ENCODE measurements at regions of chr9 and their contacts with region 1.

Region 1: GRCh38 chr9:90870621-90871326 is 69.2 kb downstream of the SYK start:
- DNase-seq: peak in 12 of 14 experiments; percentile 4 to 72 (median 16)
- ATAC-seq: no peak
- H3K4me3 ChIP-seq: no peak overlapping the region
- H3K4me3 Mint-ChIP-seq: no peak overlapping the region
- H3K27ac ChIP-seq: no peak overlapping the region
- H3K27ac Mint-ChIP-seq: no peak overlapping the region
- H3K4me1 ChIP-seq: no peaks in the 10 kb centered on the region
- H3K4me1 Mint-ChIP-seq: no peaks in the 10 kb centered on the region
- H3K27me3 ChIP-seq: no peaks in the 10 kb centered on the region
- H3K27me3 Mint-ChIP-seq: peaks cover 17% of the 10 kb centered on the region
- CTCF ChIP-seq: peak; percentile 98

Region 2: DNA sequence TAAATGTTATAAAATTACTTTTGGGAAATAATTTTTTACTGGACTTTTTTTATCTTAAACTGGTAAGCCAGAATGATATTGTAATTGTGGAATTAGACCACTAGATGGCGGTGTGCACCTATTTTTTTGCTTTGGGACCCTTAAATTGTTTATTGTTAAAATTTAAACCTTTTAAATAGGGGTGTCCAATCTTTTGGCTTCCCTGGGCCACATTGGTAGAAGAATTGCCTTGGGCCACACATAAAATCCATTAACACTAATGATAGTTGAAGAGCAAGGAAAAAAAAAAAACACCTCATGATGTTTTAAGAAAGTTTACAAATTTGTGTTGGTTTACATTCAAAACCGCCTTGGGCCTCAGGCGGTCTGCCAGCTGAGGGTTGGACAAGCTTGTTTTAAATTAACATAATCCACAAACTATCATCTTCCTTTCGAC is 1294.4 kb before region 1 on chr9:
- CTCF ChIA-PET with region 1: no interaction called
- POLR2A ChIA-PET with region 1: no interaction called
- intact Hi-C with region 1: loop called (anchors 2 kb)
- DNase-seq: peak in 4 of 14 experiments; percentile 47 to 70 (median 54)
- ATAC-seq: no peak
- H3K4me3 ChIP-seq: no peak overlapping the region
- H3K4me3 Mint-ChIP-seq: no peak overlapping the region
- H3K27ac ChIP-seq: no peak overlapping the region
- H3K27ac Mint-ChIP-seq: no peak overlapping the region
- H3K4me1 ChIP-seq: peaks cover 11% of the 10 kb centered on the region
- H3K4me1 Mint-ChIP-seq: peaks cover 13% of the 10 kb centered on the region
- H3K27me3 ChIP-seq: peaks cover 12 to 13% of the 10 kb centered on the region in 2 experiments
- H3K27me3 Mint-ChIP-seq: peaks cover 54% of the 10 kb centered on the region
- CTCF ChIP-seq: peak; percentile 90

Region 3: DNA sequence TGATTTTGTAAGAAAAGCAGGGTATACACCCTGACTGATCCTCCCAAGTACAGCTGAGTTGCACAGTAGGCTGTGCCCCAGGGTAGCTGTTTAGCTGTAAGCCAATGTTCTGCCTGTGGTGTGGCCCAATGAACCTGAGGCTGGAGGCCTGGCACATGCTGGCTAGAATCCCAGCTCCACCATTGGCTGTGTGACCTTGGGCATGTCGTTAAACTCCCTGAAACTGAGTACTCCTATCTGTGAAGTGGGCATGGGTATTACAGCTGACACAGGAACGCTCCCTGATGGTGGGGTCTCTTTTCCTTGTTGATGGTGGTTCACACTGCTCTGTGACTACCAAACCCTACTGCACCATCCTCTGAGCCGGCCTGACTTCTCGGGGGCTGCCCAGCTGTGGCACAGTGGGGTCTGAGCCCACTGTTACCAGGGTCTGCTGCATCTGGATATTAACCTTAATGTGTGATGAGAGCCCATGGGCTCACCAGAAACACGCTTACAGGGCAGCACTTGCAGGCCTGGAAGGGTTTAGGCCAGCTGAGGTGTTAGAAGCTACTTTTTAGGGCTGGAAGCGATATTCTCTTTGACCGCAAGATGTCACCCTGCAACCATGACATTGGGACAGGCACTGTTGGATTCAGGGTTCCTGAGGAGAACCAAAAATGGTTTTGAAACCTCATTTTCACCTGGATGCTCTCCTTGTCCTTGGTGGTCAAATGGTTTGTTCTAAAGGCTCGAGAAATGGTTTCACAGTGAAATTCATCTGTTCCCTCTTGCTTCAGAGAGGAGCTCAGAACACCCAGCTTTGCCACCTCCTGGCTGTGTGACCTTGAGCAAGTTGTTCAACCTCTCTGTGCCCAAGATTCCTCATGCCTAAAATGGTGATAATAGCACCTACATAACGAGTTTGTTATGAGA is 1272.8 kb before region 1 on chr9:
- CTCF ChIA-PET with region 1: interaction called, 5 read pairs
- POLR2A ChIA-PET with region 1: no interaction called
- intact Hi-C with region 1: loop called (anchors 1 to 2 kb)
- DNase-seq: peak in 13 of 14 experiments; percentile 27 to 81 (median 44)
- ATAC-seq: peak; percentile 42
- H3K4me3 ChIP-seq: no peak overlapping the region
- H3K4me3 Mint-ChIP-seq: no peak overlapping the region
- H3K27ac ChIP-seq: no peak overlapping the region
- H3K27ac Mint-ChIP-seq: no peak overlapping the region
- H3K4me1 ChIP-seq: peaks cover 5% of the 10 kb centered on the region
- H3K4me1 Mint-ChIP-seq: peaks cover 2% of the 10 kb centered on the region
- H3K27me3 ChIP-seq: peaks cover 0 to 4% of the 10 kb centered on the region in 2 experiments
- H3K27me3 Mint-ChIP-seq: no peaks in the 10 kb centered on the region
- CTCF ChIP-seq: peak; percentile 68

Region 4: DNA sequence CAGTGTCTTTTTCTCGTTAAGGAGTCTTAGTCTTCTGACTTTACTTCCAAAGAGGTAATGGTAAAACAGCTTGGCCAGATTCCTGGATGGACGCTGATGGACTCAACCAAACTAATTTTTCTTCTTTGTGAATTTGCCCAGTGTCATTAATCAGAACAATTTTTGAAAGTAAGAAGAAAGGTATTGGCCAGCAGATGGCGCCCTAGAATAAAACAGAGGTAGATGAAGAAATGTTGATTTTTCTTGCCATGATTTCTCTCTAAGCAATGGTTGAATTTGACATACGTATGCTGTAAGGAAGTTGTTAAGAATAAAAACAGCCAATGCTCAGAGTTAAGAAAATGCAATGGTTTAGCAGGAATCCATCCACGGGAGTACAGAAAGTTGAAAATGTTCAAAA is 728.2 kb before region 1 on chr9:
- CTCF ChIA-PET with region 1: no interaction called
- POLR2A ChIA-PET with region 1: no interaction called
- intact Hi-C with region 1: loop called (anchors 1 kb)
- DNase-seq: peak; percentile 13 to 74 (median 50)
- ATAC-seq: no peak
- H3K4me3 ChIP-seq: no peak overlapping the region
- H3K4me3 Mint-ChIP-seq: no peak overlapping the region
- H3K27ac ChIP-seq: no peak overlapping the region
- H3K27ac Mint-ChIP-seq: no peak overlapping the region
- H3K4me1 ChIP-seq: no peaks in the 10 kb centered on the region
- H3K4me1 Mint-ChIP-seq: peaks cover 5% of the 10 kb centered on the region
- H3K27me3 ChIP-seq: peaks cover 4 to 7% of the 10 kb centered on the region in 2 experiments
- H3K27me3 Mint-ChIP-seq: peaks cover 36% of the 10 kb centered on the region
- CTCF ChIP-seq: peak; percentile 83

Region 5: GRCh38 chr9:90219548-90220118 is 651.1 kb before region 1 on chr9:
- CTCF ChIA-PET with region 1: no interaction called
- POLR2A ChIA-PET with region 1: no interaction called
- intact Hi-C with region 1: loop called in 1 of 2 experiments (anchors 2 kb)
- DNase-seq: peak in 12 of 14 experiments; percentile 4 to 58 (median 20)
- ATAC-seq: peak; percentile 48
- H3K4me3 ChIP-seq: no peak overlapping the region
- H3K4me3 Mint-ChIP-seq: no peak overlapping the region
- H3K27ac ChIP-seq: no peak overlapping the region
- H3K27ac Mint-ChIP-seq: no peak overlapping the region
- H3K4me1 ChIP-seq: no peaks in the 10 kb centered on the region
- H3K4me1 Mint-ChIP-seq: no peaks in the 10 kb centered on the region
- H3K27me3 ChIP-seq: peaks cover 3 to 8% of the 10 kb centered on the region in 2 experiments
- H3K27me3 Mint-ChIP-seq: peaks cover 48% of the 10 kb centered on the region
- CTCF ChIP-seq: peak; percentile 25

Region 6: GRCh38 chr9:90855208-90855990 is 15.4 kb before region 1 on chr9:
- CTCF ChIA-PET with region 1: no interaction called
- POLR2A ChIA-PET with region 1: no interaction called
- intact Hi-C with region 1: no loop called
- DNase-seq: no peak
- ATAC-seq: no peak
- H3K4me3 ChIP-seq: no peak overlapping the region
- H3K4me3 Mint-ChIP-seq: no peak overlapping the region
- H3K27ac ChIP-seq: no peak overlapping the region
- H3K27ac Mint-ChIP-seq: no peak overlapping the region
- H3K4me1 ChIP-seq: peaks cover 2% of the 10 kb centered on the region
- H3K4me1 Mint-ChIP-seq: peaks cover 6% of the 10 kb centered on the region
- H3K27me3 ChIP-seq: peaks cover 0 to 3% of the 10 kb centered on the region in 2 experiments
- H3K27me3 Mint-ChIP-seq: no peaks in the 10 kb centered on the region
- CTCF ChIP-seq: no peak